Natural killer cell (primary cell): ENCODE measurements at regions of chr6 and their contacts with region 1.

Region 1: DNA sequence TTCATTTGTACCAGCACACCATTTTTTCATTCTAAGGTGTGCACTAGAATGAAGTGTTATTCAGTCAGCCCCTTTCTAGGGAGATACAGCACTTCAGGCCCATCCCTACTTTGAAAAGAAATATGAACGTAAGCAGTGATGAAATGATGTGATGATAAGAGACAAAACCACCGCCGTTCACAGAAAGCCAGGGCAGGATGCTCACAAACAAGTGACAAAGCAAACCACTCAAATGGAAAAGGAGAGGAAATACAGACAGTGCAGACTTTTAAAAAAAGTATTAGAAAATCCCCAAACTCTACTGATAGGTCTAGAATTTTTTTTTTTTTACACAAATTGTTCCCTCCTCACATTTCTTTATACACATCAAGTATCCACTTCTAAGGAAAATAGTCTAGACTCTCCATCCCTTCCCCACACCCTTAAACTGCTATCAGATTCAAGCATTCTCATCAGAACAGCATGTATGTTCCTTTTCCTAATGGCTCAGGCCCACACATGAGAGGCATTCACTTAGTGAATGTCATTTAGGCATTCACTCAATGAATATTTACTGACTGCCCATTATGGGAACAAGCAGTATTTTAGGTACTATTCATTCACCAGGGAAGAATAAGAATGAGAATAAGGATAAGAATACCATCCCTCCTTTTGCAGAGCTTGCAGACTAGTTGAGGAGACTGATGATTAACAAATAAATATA is 243.5 kb downstream of the GMPR start:
- DNase-seq: peak in 1 of 2 donors; percentile 92
- ATAC-seq: peak; percentile 85 to 89 (median 86)
- H3K4me3 ChIP-seq: no peak overlapping the region
- H3K4me3 Mint-ChIP-seq: peak overlapping the region; percentile 17
- H3K27ac ChIP-seq: peak overlapping the region; percentile 50
- H3K27ac Mint-ChIP-seq: peak overlapping the region; percentile 82 to 91
- H3K4me1 ChIP-seq: peaks cover 23% of the 10 kb centered on the region
- H3K4me1 Mint-ChIP-seq: peaks cover 46 to 50% of the 10 kb centered on the region in 2 donors
- H3K27me3 ChIP-seq: no peaks in the 10 kb centered on the region
- H3K27me3 Mint-ChIP-seq: no peaks in the 10 kb centered on the region
- CTCF ChIP-seq: no peak

Region 2: DNA sequence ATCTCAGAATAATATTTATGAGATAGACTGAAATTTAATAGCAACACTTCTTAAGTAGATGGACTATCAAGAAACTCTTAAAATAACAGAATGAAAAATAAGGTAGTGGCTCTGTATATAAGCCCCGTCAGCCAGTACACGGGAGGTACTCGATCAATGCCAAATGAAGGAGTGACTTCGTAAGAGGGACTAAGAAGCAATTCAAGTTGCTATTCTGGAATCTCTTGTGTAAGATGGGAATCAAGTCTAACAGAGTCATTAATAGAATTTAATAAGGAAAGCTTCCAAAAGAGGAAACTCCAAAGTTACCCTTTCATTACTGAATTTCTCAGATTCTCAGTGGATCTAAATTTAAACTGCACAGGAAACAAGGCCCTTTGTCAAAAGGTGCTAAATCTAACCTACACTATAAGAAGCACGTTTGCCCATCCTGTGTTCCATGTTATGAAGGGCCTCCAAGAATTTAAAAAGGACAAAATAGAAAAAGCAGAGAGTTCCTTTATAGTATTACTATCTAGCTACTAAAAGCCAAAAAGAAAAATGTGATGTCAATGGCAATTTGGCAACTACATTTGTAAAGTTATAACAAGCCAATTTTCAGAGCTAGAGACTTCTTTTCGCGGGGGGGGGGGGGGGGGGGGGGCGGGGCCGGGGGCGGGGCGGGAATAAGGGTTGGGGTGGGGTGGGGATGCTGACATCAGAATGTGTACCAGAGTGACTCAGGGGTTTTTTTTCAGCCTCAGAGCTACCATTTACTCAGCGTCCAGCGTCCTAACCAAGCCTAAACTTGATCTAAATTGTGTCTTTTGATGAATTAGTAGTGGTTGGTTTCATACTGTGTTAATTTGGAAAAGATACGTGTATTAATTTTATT is 42.9 kb before region 1 on chr6:
- intact Hi-C with region 1: loop called (anchors 5 kb)
- DNase-seq: peak in 1 of 2 donors; percentile 59
- ATAC-seq: peak in 1 of 3 donors; percentile 37
- H3K4me3 ChIP-seq: no peak overlapping the region
- H3K4me3 Mint-ChIP-seq: no peak overlapping the region
- H3K27ac ChIP-seq: no peak overlapping the region
- H3K27ac Mint-ChIP-seq: peak overlapping the region; percentile 13 to 60
- H3K4me1 ChIP-seq: peaks cover 17% of the 10 kb centered on the region
- H3K4me1 Mint-ChIP-seq: peaks cover 35 to 38% of the 10 kb centered on the region in 2 donors
- H3K27me3 ChIP-seq: no peaks in the 10 kb centered on the region
- H3K27me3 Mint-ChIP-seq: no peaks in the 10 kb centered on the region
- CTCF ChIP-seq: no peak